AG04450 (cell line): ENCODE measurements at regions of chr3 and their contacts with region 1.

Region 1: GRCh38 chr3:23888617-23889228 is 28.1 kb downstream of the NKIRAS1 start:
- DNase-seq: no peak
- H3K4me3 ChIP-seq: no peak overlapping the region
- H3K27ac ChIP-seq: no peak overlapping the region
- H3K27me3 ChIP-seq: no peaks in the 10 kb centered on the region
- CTCF ChIP-seq: peak; percentile 83

Region 2: DNA sequence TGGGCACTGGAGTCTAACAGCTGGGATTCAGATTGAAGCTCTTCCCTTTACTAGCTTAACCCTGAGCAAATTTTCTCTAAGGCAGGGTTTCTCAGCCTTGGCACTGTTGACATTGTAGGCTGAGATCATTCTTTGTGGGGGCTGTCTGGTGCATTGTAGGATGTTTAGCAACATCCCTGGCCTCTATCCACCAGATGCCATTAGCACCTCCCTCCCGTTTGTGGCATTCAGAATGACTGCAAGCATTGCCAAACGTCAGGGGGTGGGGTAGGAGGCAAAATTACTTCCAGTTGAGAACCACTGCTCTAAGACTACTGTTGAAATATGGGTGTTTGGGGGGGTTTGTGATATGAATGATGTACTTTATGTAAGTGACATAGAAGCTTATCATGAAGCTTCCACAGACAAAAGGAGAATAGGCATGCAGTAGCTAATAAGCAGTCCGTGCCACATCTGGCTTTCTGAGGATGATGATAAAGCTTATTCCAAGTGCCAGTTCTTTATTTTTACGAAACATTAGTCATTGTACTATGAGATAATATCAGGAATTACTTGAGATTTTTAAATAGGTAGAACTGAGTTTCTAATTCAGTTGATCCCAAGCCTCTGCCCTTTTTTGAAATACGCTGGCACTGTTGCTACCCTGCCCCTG is 11.3 kb before region 1 on chr3:
- CTCF ChIA-PET with region 1: interaction called, 38 read pairs
- POLR2A ChIA-PET with region 1: no interaction called
- DNase-seq: no peak
- H3K4me3 ChIP-seq: no peak overlapping the region
- H3K27ac ChIP-seq: peak overlapping the region; percentile 24
- H3K27me3 ChIP-seq: no peaks in the 10 kb centered on the region
- CTCF ChIP-seq: no peak

Region 3: DNA sequence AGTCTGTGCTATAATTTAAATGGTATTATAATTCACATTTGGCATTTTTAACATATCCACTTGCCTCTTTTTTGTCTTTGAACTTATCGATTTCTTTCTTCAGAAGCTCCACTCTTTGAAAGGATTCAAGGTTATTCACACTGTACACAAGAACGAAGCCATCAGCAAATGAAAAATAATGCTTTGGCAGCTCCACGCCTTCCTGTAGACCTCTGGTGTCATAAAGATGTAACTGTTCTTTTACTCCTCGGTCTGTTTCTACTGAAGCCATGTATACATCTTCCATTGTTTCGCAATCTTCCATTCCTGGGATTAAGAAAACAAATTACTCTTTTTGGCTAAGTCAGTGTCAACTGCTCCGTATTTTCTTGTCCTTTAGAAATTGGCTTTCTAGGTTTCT is 12.0 kb after region 1 on chr3:
- CTCF ChIA-PET with region 1: interaction called, 24 read pairs
- POLR2A ChIA-PET with region 1: no interaction called
- DNase-seq: no peak
- H3K4me3 ChIP-seq: no peak overlapping the region
- H3K27ac ChIP-seq: no peak overlapping the region
- H3K27me3 ChIP-seq: no peaks in the 10 kb centered on the region
- CTCF ChIP-seq: peak; percentile 28; the same call in 1 of the 2 replicates

Region 4: GRCh38 chr3:23999012-23999641 is 110.4 kb after region 1 on chr3:
- CTCF ChIA-PET with region 1: interaction called, 16 read pairs
- POLR2A ChIA-PET with region 1: no interaction called
- DNase-seq: peak; percentile 18
- H3K4me3 ChIP-seq: no peak overlapping the region
- H3K27ac ChIP-seq: no peak overlapping the region
- H3K27me3 ChIP-seq: no peaks in the 10 kb centered on the region
- CTCF ChIP-seq: peak; percentile 97

Region 5: GRCh38 chr3:24012589-24013269 is 124.0 kb after region 1 on chr3:
- CTCF ChIA-PET with region 1: no interaction called
- POLR2A ChIA-PET with region 1: no interaction called
- DNase-seq: no peak
- H3K4me3 ChIP-seq: no peak overlapping the region
- H3K27ac ChIP-seq: no peak overlapping the region
- H3K27me3 ChIP-seq: peaks cover 3% of the 10 kb centered on the region
- CTCF ChIP-seq: no peak